Common myeloid progenitor, CD34-positive (primary cell): ENCODE measurements at regions of chr4 and their contacts with region 1.

Region 1: GRCh38 chr4:158856852-158857251 is 88.0 kb downstream of the FNIP2 start:
- DNase-seq: peak; percentile 66 to 80 (median 77)
- H3K4me3 ChIP-seq: no peak overlapping the region
- H3K27ac ChIP-seq: no peak overlapping the region
- H3K4me1 ChIP-seq: peaks cover 0 to 4% (median 0%) of the 10 kb centered on the region in 4 experiments
- H3K27me3 ChIP-seq: no peaks in the 10 kb centered on the region

Region 2: DNA sequence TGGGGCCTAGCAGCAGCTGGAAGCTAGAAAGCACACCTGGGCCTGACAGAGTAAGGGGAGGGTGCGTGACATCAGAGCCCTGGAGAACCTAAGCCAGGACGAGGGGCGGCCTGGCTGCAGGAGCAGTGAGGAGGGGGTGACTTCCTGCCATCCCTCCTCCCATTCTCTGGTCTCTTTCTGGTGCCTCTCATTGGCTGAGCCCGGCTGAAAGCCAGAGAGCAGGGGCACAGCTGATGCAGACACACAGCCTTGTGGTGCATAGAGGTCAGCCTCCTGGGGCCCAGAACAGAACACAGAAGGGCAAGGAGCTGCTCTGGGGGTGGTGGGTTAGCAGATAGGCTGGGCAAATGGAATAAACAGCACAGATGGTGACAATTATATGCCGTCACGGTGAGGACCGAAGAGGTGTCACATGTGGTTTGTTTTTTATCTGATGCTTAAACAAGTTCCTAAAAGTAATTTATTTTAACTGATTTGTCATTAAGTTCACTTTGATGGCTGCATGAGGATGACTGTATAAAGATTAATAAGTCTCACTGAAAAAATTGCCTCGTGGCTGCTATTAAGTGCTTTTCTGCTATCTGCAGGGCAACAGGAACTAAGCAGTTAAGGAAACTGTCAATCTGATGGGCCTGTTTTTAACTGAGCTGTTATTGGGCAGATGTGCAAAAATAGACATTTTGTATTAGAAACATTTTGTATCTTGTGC is 13.9 kb after region 1 on chr4:
- CTCF ChIA-PET with region 1: interaction called, 31 read pairs
- POLR2A ChIA-PET with region 1: interaction called, 6 read pairs
- DNase-seq: peak; percentile 31 to 90 (median 78)
- H3K4me3 ChIP-seq: peak overlapping the region in 1 of 7 experiments; percentile 38
- H3K27ac ChIP-seq: peak overlapping the region; percentile 12 to 46
- H3K4me1 ChIP-seq: peaks cover 0 to 21% (median 6%) of the 10 kb centered on the region in 4 experiments
- H3K27me3 ChIP-seq: no peaks in the 10 kb centered on the region

Region 3: GRCh38 chr4:159175085-159175988 is 318.5 kb after region 1 on chr4:
- CTCF ChIA-PET with region 1: interaction called, 17 read pairs
- POLR2A ChIA-PET with region 1: no interaction called
- DNase-seq: peak; percentile 88 to 94 (median 93)
- H3K4me3 ChIP-seq: peak overlapping the region in 5 of 7 experiments; percentile 16 to 69 (median 36)
- H3K27ac ChIP-seq: peak overlapping the region; percentile 30 to 72
- H3K4me1 ChIP-seq: peaks cover 26 to 82% (median 63%) of the 10 kb centered on the region in 4 experiments
- H3K27me3 ChIP-seq: no peaks in the 10 kb centered on the region

Region 4: GRCh38 chr4:159201168-159201567 is 344.3 kb after region 1 on chr4:
- CTCF ChIA-PET with region 1: interaction called, 71 read pairs
- POLR2A ChIA-PET with region 1: no interaction called
- DNase-seq: no peak
- H3K4me3 ChIP-seq: no peak overlapping the region
- H3K27ac ChIP-seq: peak overlapping the region in 1 of 2 experiments; percentile 10
- H3K4me1 ChIP-seq: peaks cover 3 to 68% (median 29%) of the 10 kb centered on the region in 4 experiments
- H3K27me3 ChIP-seq: no peaks in the 10 kb centered on the region

Region 5: GRCh38 chr4:159206427-159206871 is 349.6 kb after region 1 on chr4:
- CTCF ChIA-PET with region 1: interaction called, 71 read pairs
- POLR2A ChIA-PET with region 1: no interaction called
- DNase-seq: peak; percentile 67 to 95 (median 93)
- H3K4me3 ChIP-seq: peak overlapping the region in 5 of 7 experiments; percentile 24 to 69 (median 30)
- H3K27ac ChIP-seq: peak overlapping the region in 1 of 2 experiments; percentile 27
- H3K4me1 ChIP-seq: peaks cover 15 to 59% (median 29%) of the 10 kb centered on the region in 4 experiments
- H3K27me3 ChIP-seq: no peaks in the 10 kb centered on the region